BJ (cell line): ENCODE measurements at regions of chr1 and their contacts with region 1.

Region 1: DNA sequence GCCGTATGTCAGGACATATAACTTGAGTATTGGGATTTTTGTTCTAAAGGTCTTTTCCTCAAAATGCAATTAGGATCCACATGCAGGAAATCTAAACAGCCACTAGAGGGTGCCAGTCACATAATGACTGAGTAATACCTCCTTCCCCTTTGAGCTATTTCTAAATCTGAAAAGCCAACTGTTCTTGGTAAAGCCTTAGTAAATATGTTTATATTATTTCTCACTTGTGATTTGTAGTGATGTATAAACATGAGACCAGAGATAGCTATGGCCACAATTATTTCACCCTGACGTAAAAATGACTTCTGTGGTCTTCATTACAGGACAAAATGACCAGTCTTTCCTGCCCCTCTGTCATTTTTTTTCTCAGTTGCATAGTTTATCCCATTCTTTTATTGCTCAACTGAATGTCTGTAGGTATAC is 41.0 kb upstream of the DR1 start:
- DNase-seq: peak; percentile 19
- H3K4me3 ChIP-seq: no peak overlapping the region
- H3K27me3 ChIP-seq: no peaks in the 10 kb centered on the region
- CTCF ChIP-seq: peak; percentile 85

Region 2: GRCh38 chr1:93317207-93317606 is 12.5 kb after region 1 on chr1:
- CTCF ChIA-PET with region 1: interaction called, 10 read pairs
- POLR2A ChIA-PET with region 1: no interaction called
- DNase-seq: no peak
- H3K4me3 ChIP-seq: no peak overlapping the region
- H3K27me3 ChIP-seq: no peaks in the 10 kb centered on the region
- CTCF ChIP-seq: no peak

Region 3: DNA sequence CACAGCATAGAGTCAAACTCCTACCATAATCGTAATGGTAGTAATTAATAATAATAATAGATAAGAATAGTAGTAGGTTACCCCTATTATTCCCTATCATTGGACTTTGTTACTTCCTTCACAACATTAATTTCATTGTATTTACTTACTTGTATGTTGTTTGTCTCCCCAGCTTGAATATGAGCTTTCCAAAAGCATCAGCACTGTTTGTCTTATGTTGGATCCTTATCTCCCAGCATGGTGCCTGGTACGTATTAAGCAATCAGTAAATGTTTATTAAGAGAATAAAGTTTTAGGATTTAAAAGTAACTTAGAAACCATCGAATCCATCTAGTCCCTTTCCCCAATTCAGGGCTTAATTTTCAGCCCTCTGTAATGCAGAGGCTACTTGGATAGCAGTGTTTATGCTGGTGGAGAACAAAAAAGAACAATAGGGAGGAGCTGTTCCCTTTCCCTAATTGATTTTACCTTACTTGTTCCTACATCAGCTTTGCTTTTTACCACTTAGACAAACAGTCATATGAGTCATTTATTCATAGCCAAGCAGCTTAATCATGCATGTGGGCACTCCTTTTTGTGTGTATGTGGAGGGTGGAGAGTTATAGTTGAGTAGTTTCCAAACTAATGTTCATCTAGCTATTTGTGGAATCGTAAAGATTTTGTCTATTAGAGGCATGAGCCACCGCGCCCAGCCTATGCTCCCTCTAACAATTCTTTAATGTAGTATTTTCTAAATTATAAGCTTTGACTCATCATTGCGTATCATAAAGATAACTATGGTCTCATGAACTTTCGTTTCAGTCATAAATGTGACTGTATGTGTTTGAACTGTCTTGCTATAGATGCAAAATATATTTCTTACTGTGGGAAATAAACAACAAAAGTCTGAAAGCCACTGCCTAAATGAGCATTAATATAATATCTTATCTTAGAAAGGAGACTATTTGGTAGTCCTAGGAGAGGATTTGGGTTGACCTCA is 20.0 kb after region 1 on chr1:
- CTCF ChIA-PET with region 1: interaction called, 12 read pairs
- POLR2A ChIA-PET with region 1: no interaction called
- DNase-seq: no peak
- H3K4me3 ChIP-seq: no peak overlapping the region
- H3K27me3 ChIP-seq: no peaks in the 10 kb centered on the region
- CTCF ChIP-seq: no peak

Region 4: GRCh38 chr1:93437976-93438605 is 133.4 kb after region 1 on chr1:
- CTCF ChIA-PET with region 1: interaction called, 22 read pairs
- POLR2A ChIA-PET with region 1: no interaction called
- DNase-seq: peak; percentile 17
- H3K4me3 ChIP-seq: no peak overlapping the region
- H3K27me3 ChIP-seq: peaks cover 7% of the 10 kb centered on the region
- CTCF ChIP-seq: peak; percentile 56

Region 5: GRCh38 chr1:93846211-93846991 is 541.7 kb after region 1 on chr1:
- CTCF ChIA-PET with region 1: interaction called, 15 read pairs
- POLR2A ChIA-PET with region 1: no interaction called
- DNase-seq: no peak
- H3K4me3 ChIP-seq: peak overlapping the region; percentile 84
- H3K27me3 ChIP-seq: no peaks in the 10 kb centered on the region
- CTCF ChIP-seq: peak; percentile 59